Adrenal gland (tissue), 19 donors: ENCODE measurements at regions of chr2 and their contacts with region 1.

Region 1: GRCh38 chr2:181723731-181724130 is 43.4 kb upstream of the NEUROD1 start:
- DNase-seq: no peak
- H3K4me3 ChIP-seq: no peak overlapping the region
- H3K27ac ChIP-seq: no peak overlapping the region
- H3K4me1 ChIP-seq: no peaks in the 10 kb centered on the region
- H3K27me3 ChIP-seq: no peaks in the 10 kb centered on the region
- CTCF ChIP-seq: no peak
- POLR2A ChIP-seq: no peak

Region 2: DNA sequence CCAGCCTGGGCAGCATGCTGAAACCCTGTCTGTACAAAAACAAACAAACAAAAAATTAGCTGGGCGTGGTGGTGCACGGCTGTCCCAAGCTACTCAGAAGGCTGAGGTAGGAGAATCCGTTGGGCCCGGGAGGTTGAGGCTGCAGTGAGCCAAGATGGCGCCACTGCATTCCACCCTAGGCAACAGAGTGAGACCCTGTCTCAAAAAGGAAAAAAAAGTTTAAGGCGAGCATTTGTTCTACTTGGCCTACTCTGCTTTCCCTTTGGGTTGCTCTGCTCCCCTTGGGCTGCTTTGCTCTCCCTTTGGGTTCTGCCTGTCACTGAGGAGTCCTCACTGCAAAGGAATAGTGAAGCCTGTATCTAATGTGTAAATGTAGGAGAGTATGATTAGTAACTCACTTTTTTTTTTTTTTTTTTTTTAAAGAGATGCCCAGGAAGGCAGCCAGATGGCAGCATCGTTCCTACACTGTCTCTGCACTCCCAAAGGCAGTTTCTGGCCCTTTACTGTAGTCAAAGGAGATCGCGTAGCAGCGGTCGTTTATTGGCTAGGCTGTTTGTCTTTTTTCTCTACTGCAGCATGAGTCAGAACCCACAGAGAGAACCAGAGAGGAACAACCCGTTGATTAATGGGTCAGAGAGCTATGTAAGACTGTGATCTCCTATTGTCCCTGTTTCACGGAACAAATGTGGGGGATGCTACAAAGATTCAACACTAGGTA is 1598.3 kb before region 1 on chr2:
- intact Hi-C with region 1: loop called (anchors 5 to 10 kb)
- DNase-seq: peak; percentile 58 to 83 (median 76)
- H3K4me3 ChIP-seq: no peak overlapping the region
- H3K27ac ChIP-seq: no peak overlapping the region
- H3K4me1 ChIP-seq: no peaks in the 10 kb centered on the region
- H3K27me3 ChIP-seq: no peaks in the 10 kb centered on the region
- CTCF ChIP-seq: peak; percentile 15 to 63 (median 38)
- POLR2A ChIP-seq: no peak

Region 3: DNA sequence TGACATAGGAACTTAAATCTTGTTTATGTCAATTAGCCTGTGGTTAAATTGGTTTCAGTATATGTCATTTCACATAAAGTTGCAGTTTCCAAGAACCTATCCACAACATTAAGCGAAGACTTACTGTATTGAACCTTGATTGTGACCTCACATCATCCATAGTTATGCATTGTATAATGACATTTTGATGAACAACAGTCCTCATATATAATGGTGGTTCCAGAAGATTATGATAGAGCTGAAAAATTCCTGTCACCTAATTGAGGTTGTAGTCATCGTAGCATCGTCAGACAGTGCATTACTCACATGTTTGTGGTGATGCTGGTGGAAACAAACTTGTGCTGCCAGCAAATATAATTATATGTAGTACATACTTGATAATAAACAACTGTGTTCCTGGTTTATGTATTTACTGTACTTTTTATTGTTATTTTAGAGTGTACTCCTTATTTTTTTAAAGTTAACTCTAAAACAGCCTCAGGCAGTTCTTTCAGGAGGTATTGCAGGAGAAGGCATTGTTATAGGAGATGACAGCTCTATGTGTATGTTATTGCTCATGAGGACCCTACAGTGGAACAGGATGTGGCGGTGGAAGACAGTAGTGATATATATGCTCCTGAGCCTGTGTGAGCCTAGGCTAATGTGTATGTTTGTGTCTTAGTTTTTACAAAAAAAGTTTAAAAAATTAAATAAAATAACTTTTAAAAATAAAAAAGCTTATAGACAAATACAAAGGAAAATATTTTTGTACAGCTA is 686.7 kb before region 1 on chr2:
- intact Hi-C with region 1: no loop called
- DNase-seq: no peak
- H3K4me3 ChIP-seq: no peak overlapping the region
- H3K27ac ChIP-seq: no peak overlapping the region
- H3K4me1 ChIP-seq: peaks cover 0 to 5% of the 10 kb centered on the region in 2 donors
- H3K27me3 ChIP-seq: no peaks in the 10 kb centered on the region
- CTCF ChIP-seq: no peak
- POLR2A ChIP-seq: no peak

Region 4: DNA sequence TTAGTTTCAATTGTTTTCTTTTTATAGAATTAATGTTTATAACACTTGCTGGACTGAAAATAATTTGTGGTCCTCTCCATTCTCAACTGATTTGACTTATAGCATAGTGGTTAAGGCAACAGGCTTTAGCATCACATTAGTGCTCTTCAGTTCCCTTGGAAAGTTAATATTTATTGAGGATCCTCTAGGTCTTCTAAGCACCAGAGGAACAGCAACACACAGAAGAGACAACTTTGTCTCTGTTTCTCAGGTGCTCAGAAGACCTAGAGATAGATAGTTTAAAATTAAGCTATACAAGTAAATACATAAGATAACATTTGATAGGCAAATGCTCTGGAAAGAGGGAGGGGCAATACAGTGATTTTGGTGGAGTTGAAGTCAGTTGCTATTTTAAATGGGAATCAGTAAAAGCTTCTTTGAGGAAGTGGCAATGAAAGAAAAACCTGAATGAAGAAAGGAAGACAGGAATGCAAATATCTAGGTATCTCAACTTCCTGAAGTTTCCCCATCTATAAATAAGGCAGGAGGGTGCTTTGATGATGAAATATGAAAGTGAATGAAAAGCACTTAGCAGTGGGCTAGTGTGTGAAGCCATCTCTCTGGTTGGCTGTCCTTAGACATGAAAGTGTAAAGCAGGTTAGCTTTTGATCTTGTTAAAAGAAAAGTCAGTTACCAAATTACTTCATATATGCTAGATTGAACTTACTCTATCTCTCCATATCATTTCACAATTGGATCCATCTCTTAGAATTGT is 51.3 kb before region 1 on chr2:
- intact Hi-C with region 1: no loop called
- DNase-seq: no peak
- H3K4me3 ChIP-seq: no peak overlapping the region
- H3K27ac ChIP-seq: no peak overlapping the region
- H3K4me1 ChIP-seq: no peaks in the 10 kb centered on the region
- H3K27me3 ChIP-seq: peaks cover 1% of the 10 kb centered on the region
- CTCF ChIP-seq: no peak
- POLR2A ChIP-seq: no peak